ENCODE measurements at regions of chr6 and their contacts with region 1.

Region 1: DNA sequence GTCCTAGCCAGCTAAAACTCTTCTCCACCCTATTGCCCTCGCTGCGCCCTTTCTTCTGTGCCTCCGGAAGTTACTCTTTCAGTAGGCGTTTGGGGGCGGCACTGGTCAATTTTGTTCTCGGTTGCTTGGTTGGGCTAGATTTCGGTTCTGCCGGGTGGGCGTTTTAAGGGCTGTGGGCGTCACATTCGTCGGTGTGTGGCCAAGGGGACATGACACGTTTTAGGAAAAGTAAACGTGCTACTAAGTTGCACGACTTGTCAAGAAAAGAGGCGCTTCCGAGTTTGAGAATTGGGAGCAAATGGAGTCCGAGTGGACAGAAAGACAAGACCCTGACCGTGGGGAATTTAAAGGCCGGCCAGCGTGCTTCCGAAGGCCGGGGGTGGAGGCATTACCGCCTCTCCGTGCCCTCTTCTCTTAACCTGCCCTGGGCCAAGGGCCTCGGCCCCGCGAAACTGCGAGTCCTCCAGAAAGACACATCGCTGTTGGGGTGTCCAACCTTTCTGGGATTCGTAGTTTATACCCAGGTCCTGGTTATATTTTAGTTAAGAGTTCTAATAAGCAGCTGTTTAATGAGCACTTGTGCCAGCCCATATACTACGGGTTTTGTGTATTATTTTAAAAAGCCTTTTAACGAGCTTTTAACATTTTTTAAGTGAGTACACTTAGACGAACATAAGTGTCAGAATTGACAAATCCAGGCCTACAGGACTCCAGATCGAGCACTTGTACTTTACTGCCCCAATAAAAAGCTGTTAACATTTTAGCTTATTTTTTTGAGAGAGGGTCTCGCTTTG is 661 bp upstream of the BAG6 start:
- DNase-seq: no peak
- ATAC-seq: peak; percentile 73
- H3K4me3 Mint-ChIP-seq: peak overlapping the region; percentile 94
- H3K27ac Mint-ChIP-seq: peak overlapping the region; percentile 100
- H3K4me1 Mint-ChIP-seq: peaks cover 55% of the 10 kb centered on the region
- H3K27me3 Mint-ChIP-seq: no peaks in the 10 kb centered on the region
- CTCF ChIP-seq: no peak

Region 2: GRCh38 chr6:29965873-29966601 is 1687.1 kb before region 1 on chr6:
- CTCF ChIA-PET with region 1: no interaction called
- POLR2A ChIA-PET with region 1: no interaction called
- intact Hi-C with region 1: no loop called
- DNase-seq: no peak
- ATAC-seq: peak; percentile 36
- H3K4me3 Mint-ChIP-seq: peak overlapping the region; percentile 82
- H3K27ac Mint-ChIP-seq: peak overlapping the region; percentile 92
- H3K4me1 Mint-ChIP-seq: peaks cover 50% of the 10 kb centered on the region
- H3K27me3 Mint-ChIP-seq: no peaks in the 10 kb centered on the region
- CTCF ChIP-seq: no peak

Region 3: GRCh38 chr6:31575335-31575901 is 77.7 kb before region 1 on chr6 and contains the start of gene TNF:
- CTCF ChIA-PET with region 1: no interaction called
- POLR2A ChIA-PET with region 1: interaction called, 20 read pairs
- intact Hi-C with region 1: loop called (anchors 2 kb)
- DNase-seq: peak; percentile 66
- ATAC-seq: peak; percentile 51
- H3K4me3 Mint-ChIP-seq: peak within 1 kb of the TSS; percentile 98
- H3K27ac Mint-ChIP-seq: peak within 1 kb of the TSS; percentile 99
- H3K4me1 Mint-ChIP-seq: peaks cover 95% of the 10 kb centered on the region
- H3K27me3 Mint-ChIP-seq: no peaks in the 10 kb centered on the region
- CTCF ChIP-seq: no peak
- total RNA-seq, gene TNF: 135 and 139 TPM in 2 replicates

Region 4: GRCh38 chr6:31626952-31627351 is 26.2 kb before region 1 on chr6:
- CTCF ChIA-PET with region 1: no interaction called
- POLR2A ChIA-PET with region 1: interaction called, 21 read pairs
- intact Hi-C with region 1: no loop called
- DNase-seq: no peak
- ATAC-seq: no peak
- H3K4me3 Mint-ChIP-seq: no peak overlapping the region
- H3K27ac Mint-ChIP-seq: peak overlapping the region; percentile 52
- H3K4me1 Mint-ChIP-seq: peaks cover 9% of the 10 kb centered on the region
- H3K27me3 Mint-ChIP-seq: no peaks in the 10 kb centered on the region
- CTCF ChIP-seq: no peak

Region 5: GRCh38 chr6:31729515-31729978 is 76.4 kb after region 1 on chr6:
- CTCF ChIA-PET with region 1: no interaction called
- POLR2A ChIA-PET with region 1: interaction called, 13 read pairs
- intact Hi-C with region 1: loop called (anchors 1 kb)
- DNase-seq: peak; percentile 73
- ATAC-seq: peak; percentile 45
- H3K4me3 Mint-ChIP-seq: peak overlapping the region; percentile 97
- H3K27ac Mint-ChIP-seq: peak overlapping the region; percentile 92
- H3K4me1 Mint-ChIP-seq: peaks cover 71% of the 10 kb centered on the region
- H3K27me3 Mint-ChIP-seq: no peaks in the 10 kb centered on the region
- CTCF ChIP-seq: no peak

Region 6: GRCh38 chr6:31806465-31807272 is 153.5 kb after region 1 on chr6 and contains the start of gene LSM2:
- CTCF ChIA-PET with region 1: no interaction called
- POLR2A ChIA-PET with region 1: interaction called, 5 read pairs
- intact Hi-C with region 1: loop called (anchors 1 kb)
- DNase-seq: peak; percentile 89
- ATAC-seq: peak; percentile 98
- H3K4me3 Mint-ChIP-seq: peak within 1 kb of the TSS; percentile 94
- H3K27ac Mint-ChIP-seq: peak within 1 kb of the TSS; percentile 89
- H3K4me1 Mint-ChIP-seq: peaks cover 16% of the 10 kb centered on the region
- H3K27me3 Mint-ChIP-seq: no peaks in the 10 kb centered on the region
- CTCF ChIP-seq: no peak
- total RNA-seq, gene LSM2: 61.8 and 68.6 TPM in 2 replicates

Region 7: DNA sequence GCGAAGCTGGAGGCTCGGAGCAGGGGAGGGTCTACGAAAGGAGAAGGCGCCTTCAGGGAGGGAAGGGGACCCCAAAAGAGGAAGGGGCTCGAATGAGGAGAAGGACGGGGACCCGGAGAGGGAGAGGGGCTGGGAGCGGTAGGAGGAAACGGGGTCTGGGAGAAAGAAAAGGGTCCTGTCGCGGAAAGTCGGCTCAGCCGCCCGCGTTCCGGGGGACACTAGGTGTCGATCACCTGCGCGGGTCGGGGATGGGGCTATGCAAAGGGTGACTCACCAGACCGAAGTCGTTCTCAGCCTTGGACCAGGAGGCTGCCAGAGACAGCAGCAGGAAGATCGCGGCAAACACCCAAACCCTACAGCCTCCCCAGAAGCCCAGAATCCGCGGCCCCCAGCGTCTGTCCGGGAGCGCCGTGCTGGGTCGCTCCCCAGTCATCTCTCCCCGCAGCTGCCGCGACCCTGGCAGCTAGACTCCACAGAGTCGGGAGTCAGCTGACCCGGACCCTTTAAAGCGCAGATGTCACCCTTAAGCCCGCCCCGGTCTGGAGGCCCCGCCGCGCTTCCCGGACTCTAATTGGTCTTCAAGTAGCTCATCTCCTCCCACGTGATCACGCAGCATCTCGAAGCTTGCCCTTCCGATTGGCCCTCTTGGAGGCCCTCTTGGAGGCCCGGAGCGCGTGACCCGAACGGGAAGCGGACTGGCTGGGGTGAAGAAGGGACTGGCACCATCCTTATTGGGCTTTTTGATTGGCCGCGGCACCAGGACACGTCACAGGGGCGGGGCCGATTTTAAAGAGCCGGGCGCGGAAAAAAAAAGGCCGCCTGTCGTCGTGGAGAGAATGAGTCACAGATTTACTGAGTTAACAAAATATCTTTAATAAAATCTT is 209.5 kb after region 1 on chr6 and contains the start of gene NEU1:
- CTCF ChIA-PET with region 1: no interaction called
- POLR2A ChIA-PET with region 1: interaction called, 25 read pairs
- intact Hi-C with region 1: loop called (anchors 1 kb)
- DNase-seq: peak; percentile 93
- ATAC-seq: peak; percentile 91
- H3K4me3 Mint-ChIP-seq: peak within 1 kb of the TSS; percentile 95
- H3K27ac Mint-ChIP-seq: peak within 1 kb of the TSS; percentile 93
- H3K4me1 Mint-ChIP-seq: peaks cover 21% of the 10 kb centered on the region
- H3K27me3 Mint-ChIP-seq: no peaks in the 10 kb centered on the region
- CTCF ChIP-seq: no peak
- total RNA-seq, gene NEU1: 18.3 and 19.2 TPM in 2 replicates